ENCODE measurements at regions of chr11 and their contacts with region 1.

Region 1: DNA sequence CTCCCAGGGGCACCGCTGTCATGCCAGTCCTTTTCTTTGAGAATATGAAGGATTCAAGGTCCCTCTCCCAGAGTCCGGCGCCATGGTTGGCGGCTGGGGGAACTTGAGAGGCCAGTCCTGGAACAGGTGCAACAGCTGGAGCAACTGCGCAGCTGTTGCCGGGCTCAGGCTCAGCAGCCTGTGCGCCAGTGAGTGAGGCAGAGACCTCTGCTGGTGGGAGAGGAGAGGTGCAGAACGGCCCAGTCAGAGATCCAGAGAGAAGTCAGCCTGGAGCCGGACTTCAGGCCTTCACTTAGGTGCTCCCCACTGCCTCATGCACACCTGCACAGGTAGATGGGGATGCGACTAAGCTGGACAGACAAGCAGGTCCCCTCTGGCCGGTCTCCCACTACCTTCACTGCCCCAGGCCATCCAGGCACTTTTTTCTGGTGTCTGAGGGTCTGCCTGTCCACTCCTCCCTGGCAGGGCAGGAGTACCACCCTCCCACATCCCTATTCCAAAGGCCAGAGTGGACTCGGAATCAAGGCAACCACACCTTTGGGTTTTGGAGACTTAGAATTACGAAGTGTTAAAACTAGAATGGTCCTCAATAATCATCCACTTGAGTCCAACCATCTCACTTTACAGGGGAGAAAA is 4.6 kb downstream of the CHRDL2 start:
- DNase-seq: no peak
- H3K4me3 ChIP-seq: no peak overlapping the region
- H3K27ac ChIP-seq: no peak overlapping the region
- H3K4me1 ChIP-seq: peaks cover 9% of the 10 kb centered on the region
- H3K27me3 ChIP-seq: peaks cover 3% of the 10 kb centered on the region
- CTCF ChIP-seq: peak; percentile 64 to 89 (median 81)
- POLR2A ChIP-seq: no peak

Region 2: GRCh38 chr11:74620531-74620930 is 106.1 kb before region 1 on chr11:
- intact Hi-C with region 1: no loop called
- DNase-seq: no peak
- H3K4me3 ChIP-seq: no peak overlapping the region
- H3K27ac ChIP-seq: no peak overlapping the region
- H3K4me1 ChIP-seq: no peaks in the 10 kb centered on the region
- H3K27me3 ChIP-seq: no peaks in the 10 kb centered on the region
- CTCF ChIP-seq: no peak
- POLR2A ChIP-seq: no peak

Region 3: DNA sequence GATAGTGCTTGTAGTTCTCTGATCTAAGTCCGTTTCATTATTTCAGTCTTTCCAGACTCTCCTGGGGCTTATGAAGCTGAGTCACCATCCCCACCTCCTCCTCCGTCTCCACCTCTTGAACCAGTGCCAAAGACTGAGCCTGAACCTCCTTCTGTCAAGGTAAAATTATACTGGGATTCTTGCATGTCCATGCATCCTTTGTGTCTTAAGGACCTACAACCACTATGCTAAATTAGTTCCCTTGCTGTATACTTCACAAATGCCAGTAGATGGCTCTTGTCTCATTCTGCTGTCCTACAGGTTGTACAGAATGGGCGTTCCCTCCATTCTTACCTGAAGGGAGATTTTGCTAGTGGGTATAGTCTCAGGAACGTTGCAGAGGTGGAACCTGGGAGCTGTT is 92.1 kb before region 1 on chr11:
- intact Hi-C with region 1: loop called (anchors 10 kb)
- DNase-seq: no peak
- H3K4me3 ChIP-seq: no peak overlapping the region
- H3K27ac ChIP-seq: no peak overlapping the region
- H3K4me1 ChIP-seq: no peaks in the 10 kb centered on the region
- H3K27me3 ChIP-seq: no peaks in the 10 kb centered on the region
- CTCF ChIP-seq: peak in 1 of 3 experiments; percentile 25
- POLR2A ChIP-seq: no peak